CD4-positive, alpha-beta T cell (primary cell): ENCODE measurements at regions of chr1 and their contacts with region 1.

Region 1: GRCh38 chr1:16366722-16367257 is at the start of gene SZRD1:
- DNase-seq: peak; percentile 90 to 99 (median 94)
- ATAC-seq: peak; percentile 89
- H3K4me3 ChIP-seq: peak within 1 kb of the TSS; percentile 100
- H3K4me3 Mint-ChIP-seq: peak within 1 kb of the TSS; percentile 98
- H3K27ac ChIP-seq: peak within 1 kb of the TSS; percentile 99 to 100
- H3K27ac Mint-ChIP-seq: peak within 1 kb of the TSS; percentile 99
- H3K4me1 ChIP-seq: peaks cover 38% of the 10 kb centered on the region
- H3K4me1 Mint-ChIP-seq: peaks cover 42% of the 10 kb centered on the region
- H3K27me3 ChIP-seq: no peaks in the 10 kb centered on the region
- H3K27me3 Mint-ChIP-seq: no peaks in the 10 kb centered on the region
- CTCF ChIP-seq: no peak
- total RNA-seq, gene SZRD1: 115 to 120 TPM

Region 2: GRCh38 chr1:16078925-16079656 is 287.7 kb before region 1 on chr1:
- CTCF ChIA-PET with region 1: interaction called, 5 read pairs
- POLR2A ChIA-PET with region 1: interaction called, 3 read pairs
- intact Hi-C with region 1: loop called in 1 of 2 experiments (anchors 5 kb)
- DNase-seq: peak; percentile 42 to 87 (median 70)
- ATAC-seq: peak; percentile 75
- H3K4me3 ChIP-seq: peak overlapping the region; percentile 38
- H3K4me3 Mint-ChIP-seq: peak overlapping the region; percentile 87
- H3K27ac ChIP-seq: no peak overlapping the region
- H3K27ac Mint-ChIP-seq: no peak overlapping the region
- H3K4me1 ChIP-seq: peaks cover 13% of the 10 kb centered on the region
- H3K4me1 Mint-ChIP-seq: peaks cover 5% of the 10 kb centered on the region
- H3K27me3 ChIP-seq: peaks cover under 1 to 1% of the 10 kb centered on the region in 2 experiments
- H3K27me3 Mint-ChIP-seq: peaks cover 14% of the 10 kb centered on the region
- CTCF ChIP-seq: peak; percentile 75

Region 3: GRCh38 chr1:16289963-16290362 is 76.8 kb before region 1 on chr1:
- CTCF ChIA-PET with region 1: no interaction called
- POLR2A ChIA-PET with region 1: no interaction called
- intact Hi-C with region 1: no loop called
- DNase-seq: no peak
- ATAC-seq: no peak
- H3K4me3 ChIP-seq: no peak overlapping the region
- H3K4me3 Mint-ChIP-seq: no peak overlapping the region
- H3K27ac ChIP-seq: no peak overlapping the region
- H3K27ac Mint-ChIP-seq: no peak overlapping the region
- H3K4me1 ChIP-seq: no peaks in the 10 kb centered on the region
- H3K4me1 Mint-ChIP-seq: no peaks in the 10 kb centered on the region
- H3K27me3 ChIP-seq: no peaks in the 10 kb centered on the region
- H3K27me3 Mint-ChIP-seq: no peaks in the 10 kb centered on the region
- CTCF ChIP-seq: no peak

Region 4: GRCh38 chr1:16351994-16352841 is 14.6 kb before region 1 on chr1 and contains the start of gene FBXO42:
- CTCF ChIA-PET with region 1: interaction called, 51 read pairs
- POLR2A ChIA-PET with region 1: interaction called, 37 read pairs
- intact Hi-C with region 1: loop called (anchors 1 kb)
- DNase-seq: peak; percentile 82 to 98 (median 91)
- ATAC-seq: peak; percentile 90
- H3K4me3 ChIP-seq: peak within 1 kb of the TSS; percentile 97
- H3K4me3 Mint-ChIP-seq: peak within 1 kb of the TSS; percentile 97
- H3K27ac ChIP-seq: peak within 1 kb of the TSS; percentile 83 to 89
- H3K27ac Mint-ChIP-seq: peak within 1 kb of the TSS; percentile 93
- H3K4me1 ChIP-seq: peaks cover 30% of the 10 kb centered on the region
- H3K4me1 Mint-ChIP-seq: peaks cover 34% of the 10 kb centered on the region
- H3K27me3 ChIP-seq: no peaks in the 10 kb centered on the region
- H3K27me3 Mint-ChIP-seq: no peaks in the 10 kb centered on the region
- CTCF ChIP-seq: peak; percentile 52
- total RNA-seq, gene FBXO42: 14.3 to 14.9 TPM

Region 5: GRCh38 chr1:16420424-16421118 is 53.8 kb after region 1 on chr1:
- CTCF ChIA-PET with region 1: no interaction called
- POLR2A ChIA-PET with region 1: interaction called, 13 read pairs
- intact Hi-C with region 1: no loop called
- DNase-seq: peak; percentile 19 to 91 (median 45)
- ATAC-seq: peak; percentile 95
- H3K4me3 ChIP-seq: peak overlapping the region; percentile 7
- H3K4me3 Mint-ChIP-seq: peak overlapping the region; percentile 36
- H3K27ac ChIP-seq: peak overlapping the region; percentile 30 to 65
- H3K27ac Mint-ChIP-seq: peak overlapping the region; percentile 74
- H3K4me1 ChIP-seq: peaks cover 32% of the 10 kb centered on the region
- H3K4me1 Mint-ChIP-seq: peaks cover 29% of the 10 kb centered on the region
- H3K27me3 ChIP-seq: no peaks in the 10 kb centered on the region
- H3K27me3 Mint-ChIP-seq: no peaks in the 10 kb centered on the region
- CTCF ChIP-seq: no peak

Region 6: DNA sequence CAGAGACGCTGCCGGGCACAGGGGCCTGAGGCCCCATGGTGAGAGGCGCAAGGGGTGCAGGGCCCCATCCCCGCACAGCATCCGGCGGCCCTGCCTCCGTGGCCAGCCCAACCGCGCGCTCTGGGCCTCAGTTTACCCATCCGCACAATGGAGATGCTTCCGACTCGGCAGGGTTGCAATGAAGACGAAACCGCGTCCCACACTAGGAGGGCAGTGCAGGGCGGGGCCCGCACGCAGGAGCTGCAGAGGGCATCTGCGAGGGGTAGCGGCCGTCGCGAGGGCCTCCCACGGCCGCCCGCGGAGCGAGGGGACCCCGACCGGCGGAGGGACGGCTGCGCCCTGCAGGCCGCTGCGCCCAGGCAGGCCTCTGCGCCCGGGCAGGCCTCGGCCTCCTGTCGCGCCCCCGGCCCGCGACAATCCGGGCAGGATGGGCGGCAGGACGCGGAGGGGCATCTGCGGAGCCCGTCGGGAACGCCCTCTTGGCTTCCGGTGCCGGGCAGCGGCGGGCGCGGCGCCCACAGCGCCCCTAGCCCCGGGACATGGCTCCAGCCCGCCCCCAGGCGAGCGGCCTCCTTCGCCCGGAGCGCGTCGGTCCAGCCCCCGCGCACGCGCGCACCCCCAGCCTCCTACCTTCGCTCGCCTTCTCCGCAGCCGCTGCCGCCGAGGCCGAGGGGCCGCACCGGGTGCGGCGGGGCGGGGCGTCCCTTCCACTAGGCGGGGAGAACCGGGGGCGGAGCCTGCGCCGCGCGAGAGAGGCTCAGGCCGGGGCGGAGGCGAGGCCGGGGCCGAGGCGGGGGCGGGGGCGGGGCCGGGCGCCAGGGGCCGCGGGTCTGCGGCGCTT is 132.0 kb after region 1 on chr1:
- CTCF ChIA-PET with region 1: no interaction called
- POLR2A ChIA-PET with region 1: no interaction called
- intact Hi-C with region 1: loop called in 1 of 2 experiments (anchors 10 kb)
- DNase-seq: peak; percentile 70 to 93 (median 82)
- ATAC-seq: peak; percentile 90
- H3K4me3 ChIP-seq: peak overlapping the region; percentile 92
- H3K4me3 Mint-ChIP-seq: peak overlapping the region; percentile 80
- H3K27ac ChIP-seq: peak overlapping the region in 1 of 2 donors; percentile 21
- H3K27ac Mint-ChIP-seq: peak overlapping the region; percentile 75
- H3K4me1 ChIP-seq: peaks cover 20% of the 10 kb centered on the region
- H3K4me1 Mint-ChIP-seq: peaks cover 25% of the 10 kb centered on the region
- H3K27me3 ChIP-seq: no peaks in the 10 kb centered on the region
- H3K27me3 Mint-ChIP-seq: no peaks in the 10 kb centered on the region
- CTCF ChIP-seq: no peak